Heart left ventricle (tissue), 16 donors: ENCODE measurements at regions of chr14 and their contacts with region 1.

Region 1: GRCh38 chr14:105999361-106000028 is 473.1 kb downstream of the TMEM121 start:
- DNase-seq: peak; percentile 38 to 86 (median 60)
- ATAC-seq: peak in 2 of 4 donors; percentile 79 to 83
- H3K4me3 ChIP-seq: no peak overlapping the region
- H3K27ac ChIP-seq: no peak overlapping the region
- H3K4me1 ChIP-seq: peaks cover 0 to 10% (median 0%) of the 10 kb centered on the region in 12 donors
- H3K27me3 ChIP-seq: peaks cover 0 to 9% (median 0%) of the 10 kb centered on the region in 9 donors
- CTCF ChIP-seq: peak in 10 of 12 donors; percentile 13 to 62 (median 44)
- POLR2A ChIP-seq: no peak

Region 2: DNA sequence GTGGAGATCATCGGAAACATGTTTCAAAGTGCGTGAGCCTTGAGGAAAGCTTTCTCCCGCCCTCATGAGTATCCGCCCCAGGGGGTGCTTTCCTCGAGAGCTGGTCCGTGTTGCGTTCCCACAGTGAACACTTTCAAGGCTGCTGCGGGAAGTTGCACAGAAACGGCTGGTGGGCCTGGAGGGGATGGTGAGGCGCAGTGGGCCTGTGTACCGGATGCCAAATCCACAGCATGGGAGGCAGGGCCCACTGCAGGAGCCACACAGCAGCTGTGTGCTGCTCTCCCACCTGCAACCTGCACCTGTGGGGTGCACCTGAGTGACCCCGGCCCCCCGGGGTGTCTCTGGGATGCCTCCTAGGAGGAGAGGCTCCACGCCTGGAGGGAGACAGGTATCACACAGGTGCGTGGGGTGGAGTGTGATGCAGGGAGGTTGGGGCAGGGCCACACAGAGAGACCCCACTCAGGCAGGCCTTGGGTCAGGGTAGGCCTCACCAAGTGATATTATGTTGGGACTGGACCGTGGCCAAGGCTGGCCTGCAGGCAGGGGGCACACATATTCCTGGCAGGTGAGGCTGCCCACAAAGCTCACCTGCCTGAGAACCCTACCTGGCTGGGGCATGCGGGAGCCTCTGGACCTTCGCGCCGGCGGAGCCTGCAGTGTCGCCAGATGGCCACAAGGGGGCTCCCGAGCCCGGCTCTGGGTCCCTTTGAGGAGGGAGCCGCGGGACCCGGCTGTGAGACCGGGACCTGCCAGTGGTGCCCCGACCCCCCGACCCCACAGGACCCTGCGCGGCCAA is 461.9 kb before region 1 on chr14:
- intact Hi-C with region 1: loop called in 1 of 10 experiments (anchors 5 kb)
- DNase-seq: peak in 4 of 5 donors; percentile 46 to 76 (median 53)
- ATAC-seq: peak; percentile 36 to 74 (median 66)
- H3K4me3 ChIP-seq: no peak overlapping the region
- H3K27ac ChIP-seq: no peak overlapping the region
- H3K4me1 ChIP-seq: peaks cover 0 to 5% (median 0%) of the 10 kb centered on the region in 12 donors
- H3K27me3 ChIP-seq: peaks cover 0 to 26% (median 11%) of the 10 kb centered on the region in 9 donors
- CTCF ChIP-seq: peak; percentile 90 to 99 (median 98)
- POLR2A ChIP-seq: no peak

Region 3: DNA sequence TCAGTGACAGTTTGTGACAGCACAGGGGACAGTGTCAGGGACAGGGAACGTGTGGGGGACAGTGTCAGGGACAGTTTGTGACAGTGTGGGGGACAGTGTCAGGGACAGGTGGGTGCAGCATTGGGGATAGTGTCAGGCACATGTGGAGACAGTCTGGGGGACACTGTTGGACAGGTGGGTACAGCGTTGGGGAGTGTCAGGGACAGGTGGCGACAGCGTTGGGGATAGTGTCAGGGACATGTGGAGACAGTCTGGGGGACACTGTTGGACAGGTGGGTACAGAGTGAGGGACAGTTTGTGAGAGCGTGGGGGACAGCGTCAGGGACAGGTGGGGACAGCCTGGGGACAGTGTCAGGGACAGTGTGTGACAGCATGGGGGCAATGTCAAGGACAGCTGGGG is 333.1 kb before region 1 on chr14:
- intact Hi-C with region 1: loop called in 2 of 10 experiments (anchors 5 to 10 kb)
- DNase-seq: no peak
- ATAC-seq: peak in 2 of 4 donors; percentile 39 to 55
- H3K4me3 ChIP-seq: no peak overlapping the region
- H3K27ac ChIP-seq: no peak overlapping the region
- H3K4me1 ChIP-seq: peaks cover 0 to 6% (median 0%) of the 10 kb centered on the region in 12 donors
- H3K27me3 ChIP-seq: no peaks in the 10 kb centered on the region
- CTCF ChIP-seq: no peak
- POLR2A ChIP-seq: no peak

Region 4: GRCh38 chr14:105682940-105683570 is 316.4 kb before region 1 on chr14:
- intact Hi-C with region 1: loop called in 1 of 10 experiments (anchors 10 kb)
- DNase-seq: no peak
- ATAC-seq: no peak
- H3K4me3 ChIP-seq: no peak overlapping the region
- H3K27ac ChIP-seq: no peak overlapping the region
- H3K4me1 ChIP-seq: no peaks in the 10 kb centered on the region
- H3K27me3 ChIP-seq: peaks cover 0 to 4% (median 0%) of the 10 kb centered on the region in 9 donors
- CTCF ChIP-seq: no peak
- POLR2A ChIP-seq: no peak

Region 5: GRCh38 chr14:106080924-106081323 is 81.4 kb after region 1 on chr14:
- intact Hi-C with region 1: no loop called
- DNase-seq: no peak
- ATAC-seq: no peak
- H3K4me3 ChIP-seq: no peak overlapping the region
- H3K27ac ChIP-seq: no peak overlapping the region
- H3K4me1 ChIP-seq: no peaks in the 10 kb centered on the region
- H3K27me3 ChIP-seq: no peaks in the 10 kb centered on the region
- CTCF ChIP-seq: no peak
- POLR2A ChIP-seq: no peak

Region 6: DNA sequence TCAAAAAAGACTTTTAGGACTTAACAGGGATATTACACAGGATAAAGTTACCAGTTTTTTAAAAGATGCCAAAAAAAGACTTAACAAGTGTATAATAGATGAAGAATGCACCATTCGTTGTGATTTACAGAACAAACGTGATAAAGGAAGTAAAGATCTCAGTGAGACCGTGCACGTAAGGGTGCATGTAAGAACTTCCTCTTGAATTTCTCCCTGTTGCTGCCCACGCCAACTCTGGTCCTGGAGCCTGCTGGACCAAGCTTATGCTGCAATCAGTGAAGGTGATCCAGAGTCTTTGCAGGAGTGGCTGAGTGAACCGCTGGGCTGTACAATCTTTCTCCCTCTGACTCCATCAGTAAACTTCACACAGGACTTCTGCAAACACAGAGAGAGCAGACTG is 120.6 kb after region 1 on chr14:
- intact Hi-C with region 1: no loop called
- DNase-seq: no peak
- ATAC-seq: no peak
- H3K4me3 ChIP-seq: no peak overlapping the region
- H3K27ac ChIP-seq: no peak overlapping the region
- H3K4me1 ChIP-seq: no peaks in the 10 kb centered on the region
- H3K27me3 ChIP-seq: peaks cover 0 to 54% (median 9%) of the 10 kb centered on the region in 9 donors
- CTCF ChIP-seq: no peak
- POLR2A ChIP-seq: no peak

Region 7: GRCh38 chr14:106141242-106142220 is 142.0 kb after region 1 on chr14:
- intact Hi-C with region 1: no loop called
- DNase-seq: no peak
- ATAC-seq: peak in 1 of 4 donors; percentile 27
- H3K4me3 ChIP-seq: no peak overlapping the region
- H3K27ac ChIP-seq: no peak overlapping the region
- H3K4me1 ChIP-seq: no peaks in the 10 kb centered on the region
- H3K27me3 ChIP-seq: peaks cover 0 to 11% (median 0%) of the 10 kb centered on the region in 9 donors
- CTCF ChIP-seq: no peak
- POLR2A ChIP-seq: no peak